Posterior vena cava (tissue), 2 donors: ENCODE measurements at regions of chr20 and their contacts with region 1.

Region 1: GRCh38 chr20:54515862-54516628 is 40.7 kb downstream of the DOK5 start:
- DNase-seq: no peak

Region 2: DNA sequence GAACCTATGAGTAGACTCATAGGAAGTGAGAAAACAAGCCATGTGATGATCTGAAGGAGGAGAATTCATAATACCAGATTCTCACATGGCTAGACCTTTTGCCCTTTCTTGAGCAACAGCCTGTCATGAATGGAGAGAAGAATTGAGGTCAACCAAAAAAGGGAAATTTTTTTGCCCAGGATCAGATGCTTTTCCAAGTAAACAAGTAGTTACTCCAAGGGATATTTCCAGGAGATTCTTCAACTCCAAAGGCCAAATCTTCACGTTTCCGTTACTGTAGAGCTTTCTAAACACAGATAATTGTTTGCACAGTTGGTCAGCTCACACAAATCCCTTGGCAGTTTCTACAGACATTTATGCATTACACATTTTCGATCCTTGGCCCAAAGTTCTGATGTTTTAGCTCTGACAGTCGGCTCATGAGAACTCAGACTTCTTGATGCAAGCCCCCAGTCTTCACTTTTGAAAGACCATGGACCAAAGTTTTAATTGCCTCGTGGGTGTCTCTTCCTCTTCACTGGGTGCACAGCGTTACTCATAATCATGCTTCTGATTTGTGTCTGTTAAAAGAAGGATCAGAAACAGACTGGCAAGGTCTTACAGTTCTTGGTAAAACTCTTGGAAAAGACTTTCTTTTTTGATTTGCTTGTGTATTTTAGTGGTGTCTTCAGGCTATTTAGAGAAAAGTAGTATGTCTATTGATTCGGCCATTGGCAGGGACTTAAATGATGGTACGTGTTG is 1428.8 kb before region 1 on chr20:
- intact Hi-C with region 1: loop called in 1 of 2 experiments (anchors 5 kb)
- DNase-seq: no peak

Region 3: DNA sequence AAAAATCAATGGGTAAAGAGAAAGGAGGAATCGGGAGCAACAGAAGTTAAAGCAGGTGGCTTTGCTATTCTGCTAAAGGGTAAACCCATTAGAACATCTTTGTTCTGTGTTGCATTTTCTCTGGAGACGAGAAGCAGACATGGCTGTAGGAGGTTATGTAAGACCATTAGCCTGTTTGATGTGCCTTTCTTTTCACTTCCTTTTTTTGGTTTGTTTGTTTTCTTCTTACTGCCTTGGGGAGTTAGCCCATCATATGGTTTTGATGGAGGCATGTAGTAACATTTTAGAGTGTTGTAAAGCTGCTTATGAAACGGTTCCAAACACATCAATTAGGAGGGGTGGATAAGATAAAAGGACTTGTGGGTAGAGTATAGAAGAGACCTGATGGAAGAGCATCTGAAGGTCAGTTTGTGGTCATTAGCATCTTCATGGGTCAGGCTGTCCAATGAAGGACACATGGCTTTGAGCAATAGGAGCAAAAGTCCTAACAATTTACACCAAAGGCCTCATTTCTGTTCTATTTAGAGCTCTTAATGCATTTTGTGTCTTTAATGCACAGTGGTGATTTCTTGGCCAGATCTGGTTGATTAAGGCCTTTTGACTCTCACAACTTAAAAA is 90.4 kb after region 1 on chr20:
- intact Hi-C with region 1: no loop called
- DNase-seq: no peak